ENCODE measurements at regions of chr18 and their contacts with region 1.

Region 1: DNA sequence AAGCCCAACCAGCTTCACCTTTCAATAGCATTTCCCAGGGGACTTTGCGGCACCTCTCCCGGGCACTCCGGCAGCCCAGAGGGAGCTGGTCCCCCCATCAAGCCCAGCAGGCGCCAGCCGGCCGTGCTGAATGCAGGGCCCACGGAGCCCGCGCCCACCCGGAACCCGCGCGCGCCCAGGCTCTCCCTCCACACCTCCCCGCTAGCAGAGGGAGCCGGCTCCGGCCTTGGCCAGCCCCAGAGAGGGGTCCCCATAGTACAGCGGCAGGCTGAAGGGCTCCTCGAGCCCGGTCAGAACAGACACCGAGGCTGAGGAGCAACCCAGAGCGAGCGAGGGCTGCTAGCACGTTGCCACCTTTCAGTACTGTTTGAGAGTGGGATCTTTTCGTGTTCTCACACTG is 300.8 kb downstream of the DSEL start:
- DNase-seq: peak in 1 of 2 donors; percentile 45
- ATAC-seq: no peak
- H3K4me3 ChIP-seq: no peak overlapping the region
- H3K27ac ChIP-seq: no peak overlapping the region
- H3K4me1 ChIP-seq: no peaks in the 10 kb centered on the region
- H3K27me3 ChIP-seq: no peaks in the 10 kb centered on the region
- CTCF ChIP-seq: no peak

Region 2: GRCh38 chr18:67410075-67411070 is 194.7 kb after region 1 on chr18:
- intact Hi-C with region 1: no loop called
- DNase-seq: no peak
- ATAC-seq: no peak
- H3K4me3 ChIP-seq: no peak overlapping the region
- H3K27ac ChIP-seq: no peak overlapping the region
- H3K4me1 ChIP-seq: no peaks in the 10 kb centered on the region
- H3K27me3 ChIP-seq: no peaks in the 10 kb centered on the region
- CTCF ChIP-seq: no peak

Region 3: DNA sequence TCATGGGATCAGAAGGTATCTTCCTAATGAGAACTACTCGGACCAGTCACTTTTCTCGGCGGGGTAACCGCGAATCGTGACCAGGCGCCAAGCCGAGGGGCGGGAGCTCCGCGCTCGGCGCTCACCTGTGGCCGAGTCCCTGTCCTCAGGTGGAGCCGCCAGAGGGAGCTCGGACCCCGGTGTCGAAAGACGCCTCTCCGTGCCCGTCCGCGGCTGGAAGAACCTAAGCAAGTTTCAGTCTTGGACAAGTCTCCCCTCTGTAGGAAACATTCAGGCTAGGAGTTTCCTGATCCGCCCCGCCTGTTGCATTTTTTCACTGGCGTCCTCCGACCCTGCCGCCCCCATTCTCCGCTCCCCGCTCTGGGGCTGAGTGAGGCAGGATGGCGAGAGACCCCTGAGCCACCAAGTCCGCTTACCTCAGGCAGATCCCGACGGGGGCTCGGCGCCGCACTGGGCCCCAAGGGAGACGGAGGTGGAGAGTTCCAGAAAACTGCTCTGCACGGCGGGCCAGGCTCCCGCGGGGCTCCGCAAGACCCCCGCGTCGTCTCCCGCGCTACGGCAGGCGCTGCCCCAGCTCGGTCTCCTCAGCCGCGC is 300.4 kb after region 1 on chr18:
- intact Hi-C with region 1: loop called in 1 of 2 experiments (anchors 10 kb)
- DNase-seq: peak; percentile 78 to 88
- ATAC-seq: peak; percentile 56 to 75 (median 74)
- H3K4me3 ChIP-seq: peak overlapping the region; percentile 93
- H3K27ac ChIP-seq: peak overlapping the region; percentile 77
- H3K4me1 ChIP-seq: peaks cover 9% of the 10 kb centered on the region
- H3K27me3 ChIP-seq: no peaks in the 10 kb centered on the region
- CTCF ChIP-seq: peak; percentile 71

Region 4: DNA sequence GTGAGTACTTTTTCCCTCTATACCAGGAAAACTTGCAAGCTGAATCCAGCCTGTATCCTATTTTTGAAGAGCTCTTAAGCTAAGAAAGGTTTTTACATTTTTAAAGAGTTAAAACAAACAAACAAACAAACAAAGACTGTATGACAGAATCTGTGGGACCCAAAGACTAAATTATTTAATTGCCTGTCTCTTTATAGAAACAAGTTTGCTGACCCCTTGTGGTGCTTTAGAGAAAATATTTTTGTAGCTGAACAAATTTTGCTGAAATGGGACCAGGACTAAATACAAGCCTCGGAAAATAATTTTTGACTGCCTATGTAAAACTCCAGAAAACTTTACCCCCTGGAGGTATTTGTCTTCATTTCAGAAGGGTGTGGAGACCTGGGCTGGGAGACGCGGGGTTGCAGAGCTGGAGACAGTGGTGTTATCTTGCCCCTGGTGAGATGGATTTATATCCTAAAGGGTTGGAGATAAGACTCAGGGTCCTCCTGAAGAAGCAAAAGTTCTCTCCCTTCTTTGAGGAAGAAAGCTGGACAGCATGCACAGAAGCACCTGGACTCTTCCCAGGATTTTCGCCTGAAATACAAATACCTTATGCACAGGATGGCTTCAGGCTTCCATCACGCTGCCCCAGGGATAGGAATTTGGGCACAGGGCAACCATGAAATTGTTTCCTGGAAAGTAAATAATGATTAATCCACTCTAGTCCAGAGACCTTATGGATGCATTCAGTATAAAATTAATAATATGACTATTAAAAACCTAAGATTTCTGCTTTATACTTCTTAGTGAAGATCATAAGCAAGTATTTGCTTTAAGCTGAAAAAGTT is 1444.9 kb after region 1 on chr18:
- intact Hi-C with region 1: loop called (anchors 2 to 5 kb)
- DNase-seq: no peak
- ATAC-seq: no peak
- H3K4me3 ChIP-seq: no peak overlapping the region
- H3K27ac ChIP-seq: no peak overlapping the region
- H3K4me1 ChIP-seq: no peaks in the 10 kb centered on the region
- H3K27me3 ChIP-seq: no peaks in the 10 kb centered on the region
- CTCF ChIP-seq: peak; percentile 49

Region 5: GRCh38 chr18:68735483-68736343 is 1520.0 kb after region 1 on chr18:
- intact Hi-C with region 1: loop called in 1 of 2 experiments (anchors 10 kb)
- DNase-seq: no peak
- ATAC-seq: no peak
- H3K4me3 ChIP-seq: no peak overlapping the region
- H3K27ac ChIP-seq: no peak overlapping the region
- H3K4me1 ChIP-seq: no peaks in the 10 kb centered on the region
- H3K27me3 ChIP-seq: no peaks in the 10 kb centered on the region
- CTCF ChIP-seq: peak; percentile 58